A549 (cell line): ENCODE measurements at regions of chr12 and their contacts with region 1.

Region 1: GRCh38 chr12:48857278-48857994 is 5.5 kb upstream of the DDX23 start:
- DNase-seq: no peak
- ATAC-seq: no peak
- H3K4me3 ChIP-seq: no peak overlapping the region
- H3K27ac ChIP-seq: no peak overlapping the region
- H3K4me1 ChIP-seq: peaks cover 32% of the 10 kb centered on the region
- CTCF ChIP-seq: no peak
- EP300 ChIP-seq: no peak
- POLR2A ChIP-seq: no peak
- RAD21 ChIP-seq: no peak

Region 2: GRCh38 chr12:48750769-48751735 is 106.4 kb before region 1 on chr12:
- CTCF ChIA-PET with region 1: no interaction called
- POLR2A ChIA-PET with region 1: no interaction called
- DNase-seq: no peak
- ATAC-seq: no peak
- H3K4me3 ChIP-seq: no peak overlapping the region
- H3K27ac ChIP-seq: no peak overlapping the region
- H3K4me1 ChIP-seq: no peaks in the 10 kb centered on the region
- CTCF ChIP-seq: no peak
- EP300 ChIP-seq: no peak
- POLR2A ChIP-seq: no peak
- RAD21 ChIP-seq: no peak

Region 3: DNA sequence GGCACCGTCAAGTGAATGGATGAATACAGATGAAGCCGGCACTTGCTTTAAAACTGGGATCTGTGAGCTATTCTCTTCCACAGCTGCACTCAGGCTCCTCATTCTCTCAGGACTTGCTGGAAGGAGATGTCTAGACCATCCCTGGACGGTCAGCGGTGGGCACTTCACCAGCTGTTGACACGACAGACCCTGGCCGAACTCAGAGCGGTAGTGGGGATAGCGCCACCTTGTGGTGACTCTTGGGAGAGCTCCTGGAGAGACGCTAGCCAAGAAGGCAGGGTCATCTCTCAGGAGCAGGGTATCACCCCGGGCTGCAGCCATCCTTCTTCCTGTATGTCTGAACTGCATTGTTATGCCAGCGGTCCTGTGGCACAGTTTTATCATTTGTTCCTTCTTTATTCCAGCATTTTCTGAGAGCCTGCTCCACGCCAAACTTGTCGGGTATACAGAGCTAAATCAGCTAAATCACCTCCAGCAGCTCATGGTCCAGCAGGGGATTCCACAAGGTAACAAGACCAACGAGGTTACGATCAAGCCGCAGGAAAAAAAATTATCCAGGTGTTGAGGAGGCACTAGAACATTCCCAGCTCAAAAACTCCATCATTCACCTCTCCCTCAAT is 130.7 kb after region 1 on chr12:
- CTCF ChIA-PET with region 1: interaction called, 41 read pairs
- POLR2A ChIA-PET with region 1: interaction called, 8 read pairs
- DNase-seq: peak; percentile 66 to 68
- ATAC-seq: peak; percentile 64 to 87
- H3K4me3 ChIP-seq: no peak overlapping the region
- H3K27ac ChIP-seq: no peak overlapping the region
- H3K4me1 ChIP-seq: 0 out of 3 replicates have a peak, but pooled peaks cover 5% of the 10 kb centered on the region
- CTCF ChIP-seq: peak; percentile 80
- EP300 ChIP-seq: no peak
- POLR2A ChIP-seq: no peak
- RAD21 ChIP-seq: peak; percentile 15 to 44; a peak in 2 of 5 replicates